ENCODE measurements at regions of chr2 and their contacts with region 1.

Region 1: GRCh38 chr2:23926750-23927571 is at the start of gene ATAD2B:
- DNase-seq: peak; percentile 91 to 96
- ATAC-seq: peak; percentile 95 to 96 (median 96)
- H3K4me3 ChIP-seq: peak within 1 kb of the TSS; percentile 98
- H3K27ac ChIP-seq: peak within 1 kb of the TSS; percentile 99
- H3K4me1 ChIP-seq: peaks cover 41% of the 10 kb centered on the region
- H3K27me3 ChIP-seq: no peaks in the 10 kb centered on the region
- CTCF ChIP-seq: peak; percentile 90
- total RNA-seq, gene ATAD2B: 7.7 to 12.5 (median 8.4) TPM

Region 2: DNA sequence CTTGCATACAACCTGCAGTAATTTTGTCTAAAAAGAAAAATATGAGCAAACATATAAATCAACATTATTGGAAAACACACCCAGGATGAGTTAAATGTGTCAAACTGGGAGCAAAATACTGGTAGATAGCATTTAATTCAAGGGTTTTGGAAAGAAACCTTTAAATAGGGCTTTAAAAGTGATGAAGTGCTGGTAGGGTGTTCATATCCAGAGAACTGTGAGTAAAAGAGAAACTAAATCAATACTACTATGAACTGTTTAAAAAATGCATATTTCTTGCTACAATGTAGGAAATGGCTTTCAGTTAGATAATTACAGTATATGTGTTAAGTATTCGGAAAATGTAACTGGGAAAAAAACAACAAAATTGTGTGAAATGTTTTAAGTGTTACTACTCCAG is 117.8 kb before region 1 on chr2:
- intact Hi-C with region 1: no loop called
- DNase-seq: no peak
- ATAC-seq: no peak
- H3K4me3 ChIP-seq: no peak overlapping the region
- H3K27ac ChIP-seq: no peak overlapping the region
- H3K4me1 ChIP-seq: no peaks in the 10 kb centered on the region
- H3K27me3 ChIP-seq: no peaks in the 10 kb centered on the region
- CTCF ChIP-seq: no peak

Region 3: GRCh38 chr2:23939987-23940717 is 13.2 kb after region 1 on chr2 and contains the start of gene UBXN2A:
- intact Hi-C with region 1: loop called in 1 of 2 experiments (anchors 2 kb)
- DNase-seq: peak; percentile 83 to 90
- ATAC-seq: peak; percentile 93 to 94 (median 94)
- H3K4me3 ChIP-seq: peak within 1 kb of the TSS; percentile 94
- H3K27ac ChIP-seq: peak within 1 kb of the TSS; percentile 97
- H3K4me1 ChIP-seq: peaks cover 8% of the 10 kb centered on the region
- H3K27me3 ChIP-seq: no peaks in the 10 kb centered on the region
- CTCF ChIP-seq: no peak
- total RNA-seq, gene UBXN2A: 20.4 to 23.5 (median 20.8) TPM

Region 4: GRCh38 chr2:24075915-24076848 is 149.2 kb after region 1 on chr2 and contains the start of gene SF3B6:
- intact Hi-C with region 1: loop called (anchors 5 kb)
- DNase-seq: peak; percentile 97 to 98
- ATAC-seq: peak; percentile 94 to 97 (median 96)
- H3K4me3 ChIP-seq: peak within 1 kb of the TSS; percentile 93
- H3K27ac ChIP-seq: peak within 1 kb of the TSS; percentile 87
- H3K4me1 ChIP-seq: peaks cover 7% of the 10 kb centered on the region
- H3K27me3 ChIP-seq: no peaks in the 10 kb centered on the region
- CTCF ChIP-seq: no peak
- total RNA-seq, gene SF3B6: 44.2 to 60.5 (median 55.5) TPM

Region 5: DNA sequence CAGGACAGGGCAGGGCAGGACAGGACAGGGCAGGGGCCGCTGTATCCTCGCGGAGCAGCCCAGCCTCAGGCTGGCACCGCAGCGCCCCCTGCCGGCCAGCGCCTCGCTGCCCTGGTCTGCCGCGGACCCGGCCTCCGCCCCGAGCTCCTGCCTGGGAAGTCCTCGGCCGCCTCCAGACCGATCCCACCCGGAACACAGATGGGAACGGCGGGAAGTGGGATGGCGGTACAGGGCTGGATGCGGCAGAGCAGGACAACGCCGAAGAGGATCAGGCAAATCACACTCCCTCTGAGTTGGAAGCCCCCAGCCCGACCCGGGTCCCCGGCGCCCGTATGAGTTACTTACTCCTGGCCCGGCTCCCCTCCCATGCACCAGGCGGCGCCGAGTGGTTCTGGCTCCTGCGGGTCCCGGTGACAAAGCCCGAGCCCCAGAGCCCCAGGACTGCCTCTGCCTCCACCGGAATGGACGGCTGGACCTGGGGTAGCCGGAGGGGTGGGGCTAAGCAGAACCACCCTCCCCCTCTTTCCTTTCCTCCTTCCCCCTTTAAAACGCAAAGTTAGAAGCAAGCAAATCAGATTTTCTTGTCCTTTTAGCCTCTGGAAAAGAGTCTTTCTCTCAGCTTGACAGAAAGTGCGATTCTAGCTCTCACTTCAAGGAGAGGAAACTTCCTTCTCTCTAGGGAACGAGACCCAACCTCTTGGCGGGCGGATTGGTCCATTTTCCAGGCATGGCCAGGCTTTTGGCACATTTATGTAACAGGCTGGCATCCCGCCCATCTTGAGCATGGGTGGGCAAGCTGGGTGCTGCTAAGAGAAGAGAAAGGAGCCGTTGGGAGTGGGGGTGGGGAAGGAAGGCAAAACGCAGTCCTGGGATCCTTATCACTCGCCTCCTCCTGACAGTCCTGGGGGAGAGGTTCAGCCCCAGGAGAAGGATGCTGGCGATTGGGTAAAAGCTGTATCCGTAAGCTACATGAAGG is 157.7 kb after region 1 on chr2 and contains the start of gene TP53I3:
- intact Hi-C with region 1: loop called (anchors 5 kb)
- DNase-seq: peak; percentile 90 to 94
- ATAC-seq: peak; percentile 97 to 99 (median 98)
- H3K4me3 ChIP-seq: peak within 1 kb of the TSS; percentile 65
- H3K27ac ChIP-seq: peak within 1 kb of the TSS; percentile 73
- H3K4me1 ChIP-seq: peaks cover 8% of the 10 kb centered on the region
- H3K27me3 ChIP-seq: no peaks in the 10 kb centered on the region
- CTCF ChIP-seq: peak; percentile 93
- total RNA-seq, gene TP53I3: 1.3 to 5.0 (median 2.6) TPM